HepG2 (cell line): ENCODE measurements at regions of chr1 and their contacts with region 1.

Region 1: DNA sequence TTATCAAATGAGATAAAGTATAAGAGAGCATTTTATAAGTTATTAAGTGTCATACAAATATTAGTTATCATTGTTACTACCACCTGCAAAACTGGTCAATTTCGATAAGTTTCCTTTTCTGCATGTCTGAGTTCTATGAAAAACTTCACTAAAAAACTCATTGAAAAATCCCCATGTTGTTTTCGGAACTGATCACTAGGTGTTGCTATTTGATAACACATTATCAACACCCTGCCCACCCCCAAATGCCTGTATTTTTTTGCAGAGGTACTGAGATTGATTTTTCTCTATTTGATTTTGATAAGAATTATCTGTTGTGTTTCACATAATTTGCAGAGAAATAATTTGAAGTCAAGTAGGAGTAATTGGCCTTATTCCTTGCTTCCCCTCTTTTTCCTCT is 22.1 kb upstream of the DISP1 start:
- DNase-seq: no peak
- ATAC-seq: no peak
- H3K4me3 ChIP-seq: no peak overlapping the region
- H3K27ac ChIP-seq: no peak overlapping the region
- H3K4me1 ChIP-seq: peaks cover under 1% of the 10 kb centered on the region; the same call in 1 of the 2 replicates
- H3K27me3 ChIP-seq: no peaks in the 10 kb centered on the region
- CTCF ChIP-seq: peak; percentile 66
- EP300 ChIP-seq: no peak
- POLR2A ChIP-seq: no peak
- RAD21 ChIP-seq: peak; percentile 66

Region 2: GRCh38 chr1:223001653-223002634 is 209.2 kb after region 1 on chr1:
- CTCF ChIA-PET with region 1: no interaction called
- POLR2A ChIA-PET with region 1: no interaction called
- in situ Hi-C with region 1: no loop called
- intact Hi-C with region 1: loop called (anchors 1 kb)
- DNase-seq: no peak
- ATAC-seq: peak; percentile 49; the same call in 2 of the 3 replicates
- H3K4me3 ChIP-seq: no peak overlapping the region
- H3K27ac ChIP-seq: no peak overlapping the region
- H3K4me1 ChIP-seq: peaks cover 32% of the 10 kb centered on the region
- H3K27me3 ChIP-seq: no peaks in the 10 kb centered on the region
- CTCF ChIP-seq: peak; percentile 40
- EP300 ChIP-seq: no peak
- POLR2A ChIP-seq: no peak
- RAD21 ChIP-seq: 0 out of 2 replicates have a peak, but pooled peaks have one; percentile 34

Region 3: GRCh38 chr1:223087291-223088255 is 294.8 kb after region 1 on chr1:
- CTCF ChIA-PET with region 1: interaction called, 49 read pairs
- POLR2A ChIA-PET with region 1: no interaction called
- in situ Hi-C with region 1: loop called (anchors 5 kb)
- intact Hi-C with region 1: no loop called
- DNase-seq: no peak
- ATAC-seq: no peak
- H3K4me3 ChIP-seq: no peak overlapping the region
- H3K27ac ChIP-seq: no peak overlapping the region
- H3K4me1 ChIP-seq: peaks cover 17% of the 10 kb centered on the region
- H3K27me3 ChIP-seq: no peaks in the 10 kb centered on the region; a peak in 1 of 5 replicates
- CTCF ChIP-seq: no peak
- EP300 ChIP-seq: no peak
- POLR2A ChIP-seq: no peak
- RAD21 ChIP-seq: no peak

Region 4: DNA sequence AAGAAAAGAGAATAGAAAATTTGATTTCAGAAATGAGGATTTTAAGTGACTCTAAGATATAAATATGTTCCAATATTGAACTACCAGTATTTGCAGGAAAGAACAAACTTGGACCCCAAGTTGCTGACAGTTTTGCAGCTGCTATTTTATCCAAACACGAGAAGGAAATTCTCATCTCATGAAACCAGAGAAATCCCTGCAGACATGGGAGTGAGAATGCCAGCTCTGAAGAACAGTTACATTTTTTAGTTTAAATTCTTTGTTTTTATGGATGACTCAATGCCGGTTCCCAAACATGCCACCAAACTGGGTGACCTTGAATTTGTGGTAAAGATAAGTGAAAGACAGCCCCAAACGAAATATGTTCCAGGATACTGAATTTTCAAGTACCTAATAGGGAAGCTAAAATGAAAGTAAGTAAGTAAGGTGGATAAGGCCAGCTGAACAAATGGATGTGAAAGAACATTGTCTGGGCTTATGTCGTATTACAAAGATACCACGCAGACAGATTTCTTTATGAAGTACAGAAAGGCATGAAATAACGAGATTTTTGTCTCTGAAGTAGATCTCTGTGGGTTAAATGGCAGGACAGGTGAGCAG is 330.4 kb after region 1 on chr1:
- CTCF ChIA-PET with region 1: interaction called, 14 read pairs
- POLR2A ChIA-PET with region 1: interaction called, 3 read pairs
- in situ Hi-C with region 1: no loop called
- intact Hi-C with region 1: loop called (anchors 2 kb)
- DNase-seq: no peak
- ATAC-seq: no peak
- H3K4me3 ChIP-seq: peak overlapping the region in 2 of 3 experiments; percentile 6 to 7; a peak in 1 of 6 replicates
- H3K27ac ChIP-seq: no peak overlapping the region
- H3K4me1 ChIP-seq: peaks cover 9% of the 10 kb centered on the region
- H3K27me3 ChIP-seq: peaks cover 1 to 4% of the 10 kb centered on the region in 2 experiments; a peak in 2 of 5 replicates
- CTCF ChIP-seq: no peak
- EP300 ChIP-seq: no peak
- POLR2A ChIP-seq: no peak
- RAD21 ChIP-seq: no peak